ENCODE measurements at regions of chr11 and their contacts with region 1.

Region 1: GRCh38 chr11:96338910-96339705 is 3.9 kb downstream of the MAML2 start:
- DNase-seq: peak in 1 of 4 donors; percentile 46
- ATAC-seq: no peak
- H3K4me3 ChIP-seq: no peak overlapping the region
- H3K27ac ChIP-seq: peak overlapping the region; percentile 46 to 87 (median 68)
- H3K4me1 ChIP-seq: peaks cover 37% of the 10 kb centered on the region
- H3K27me3 ChIP-seq: no peaks in the 10 kb centered on the region
- CTCF ChIP-seq: no peak
- POLR2A ChIP-seq: peak in 1 of 3 donors; percentile 8

Region 2: GRCh38 chr11:96288915-96289314 is 50.2 kb before region 1 on chr11:
- intact Hi-C with region 1: loop called (anchors 10 kb)
- DNase-seq: no peak
- ATAC-seq: no peak
- H3K4me3 ChIP-seq: no peak overlapping the region
- H3K27ac ChIP-seq: no peak overlapping the region
- H3K4me1 ChIP-seq: no peaks in the 10 kb centered on the region
- H3K27me3 ChIP-seq: no peaks in the 10 kb centered on the region
- CTCF ChIP-seq: no peak
- POLR2A ChIP-seq: no peak

Measured in body of pancreas (tissue), 4 donors.